Dendritic cell treated with granulocyte-macrophage colony-stimulating factor and Interleukin-4, amounts not matched to agents 40 ng/mL and 50 ng/mL, for 4 days (primary cell): ENCODE measurements at regions of chr19 and their contacts with region 1.

Region 1: GRCh38 chr19:33302175-33302973 is at the start of gene CEBPA:
- H3K4me3 Mint-ChIP-seq: peak within 1 kb of the TSS; percentile 97
- H3K27ac Mint-ChIP-seq: peak within 1 kb of the TSS; percentile 93
- H3K4me1 Mint-ChIP-seq: peaks cover 52% of the 10 kb centered on the region
- H3K27me3 Mint-ChIP-seq: no peaks in the 10 kb centered on the region

Region 2: DNA sequence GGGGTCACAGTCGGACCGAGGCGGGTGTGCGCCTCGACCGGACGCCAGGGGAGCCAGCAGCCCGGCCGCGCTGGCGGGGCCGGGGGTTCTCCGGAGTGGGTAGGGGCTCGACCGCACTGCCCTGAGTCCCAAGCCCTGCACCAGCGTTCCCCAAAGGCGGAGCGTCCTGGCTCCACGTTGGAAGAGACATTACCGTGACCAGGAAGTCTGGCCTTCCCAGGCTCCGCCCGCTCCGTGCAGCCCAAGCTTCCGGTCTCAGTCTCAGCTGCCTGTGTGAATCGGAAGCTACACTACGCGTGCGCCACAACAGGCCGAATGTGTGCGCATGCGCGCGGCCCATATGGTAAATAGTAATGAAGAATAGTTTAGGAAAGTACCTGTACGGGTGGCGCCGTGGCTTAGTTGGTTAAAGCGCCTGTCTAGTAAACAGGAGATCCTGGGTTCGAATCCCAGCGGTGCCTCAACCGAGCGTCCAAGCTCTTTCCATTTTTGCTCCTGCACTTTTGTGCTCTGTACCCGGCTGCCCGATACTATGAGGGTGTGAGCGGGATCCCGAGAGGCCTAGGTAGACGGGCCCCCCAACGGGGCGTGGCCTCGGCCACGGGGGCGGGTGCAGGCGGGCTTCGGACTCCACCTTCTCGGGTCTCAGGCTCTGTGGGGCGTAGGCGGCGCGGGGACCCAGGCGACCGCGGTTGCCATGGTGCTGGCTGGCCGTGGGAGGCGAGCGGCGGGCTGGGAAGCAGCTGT is 125.5 kb before region 1 on chr19:
- intact Hi-C with region 1: loop called (anchors 1 kb)
- H3K4me3 Mint-ChIP-seq: peak overlapping the region; percentile 93
- H3K27ac Mint-ChIP-seq: peak overlapping the region; percentile 92
- H3K4me1 Mint-ChIP-seq: peaks cover 54% of the 10 kb centered on the region
- H3K27me3 Mint-ChIP-seq: no peaks in the 10 kb centered on the region

Region 3: DNA sequence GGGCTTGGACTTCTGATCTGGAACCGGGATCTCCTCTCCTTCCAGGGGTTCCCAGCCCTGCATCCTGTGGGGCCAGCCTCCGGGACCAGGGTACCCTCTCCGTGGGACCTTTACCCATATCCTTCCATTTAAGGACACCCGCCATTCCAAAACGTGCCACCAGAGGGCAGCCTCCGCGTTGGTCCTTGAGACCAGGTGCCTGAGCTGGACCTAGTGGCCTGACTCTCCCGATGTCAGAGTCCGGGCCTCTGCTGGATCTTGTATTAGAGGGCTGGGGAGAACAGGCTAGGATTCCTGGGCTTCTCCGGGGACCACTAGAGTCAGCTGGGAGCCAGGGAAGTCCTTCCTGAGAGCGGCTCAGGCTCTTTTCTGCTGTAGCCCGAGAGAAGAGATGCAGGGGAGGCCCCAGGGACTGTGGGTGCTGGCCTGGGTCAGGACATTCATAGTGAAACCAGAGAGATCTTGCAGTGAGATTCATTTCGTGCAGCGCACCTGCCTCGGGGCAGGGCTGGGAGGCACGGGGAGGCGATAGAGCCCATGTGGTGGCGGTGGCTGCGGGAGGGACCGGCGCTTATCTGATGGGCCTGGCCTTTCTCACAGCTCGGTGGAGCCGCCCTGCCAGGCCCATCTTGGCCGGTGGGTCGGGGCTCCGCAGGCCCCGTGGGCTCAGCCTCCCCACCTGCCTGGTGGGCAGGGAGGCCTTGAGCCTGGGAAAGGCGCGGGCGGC is 66.9 kb before region 1 on chr19:
- intact Hi-C with region 1: loop called (anchors 2 kb)
- H3K4me3 Mint-ChIP-seq: no peak overlapping the region
- H3K27ac Mint-ChIP-seq: no peak overlapping the region
- H3K4me1 Mint-ChIP-seq: peaks cover 24% of the 10 kb centered on the region
- H3K27me3 Mint-ChIP-seq: peaks cover 4% of the 10 kb centered on the region

Region 4: DNA sequence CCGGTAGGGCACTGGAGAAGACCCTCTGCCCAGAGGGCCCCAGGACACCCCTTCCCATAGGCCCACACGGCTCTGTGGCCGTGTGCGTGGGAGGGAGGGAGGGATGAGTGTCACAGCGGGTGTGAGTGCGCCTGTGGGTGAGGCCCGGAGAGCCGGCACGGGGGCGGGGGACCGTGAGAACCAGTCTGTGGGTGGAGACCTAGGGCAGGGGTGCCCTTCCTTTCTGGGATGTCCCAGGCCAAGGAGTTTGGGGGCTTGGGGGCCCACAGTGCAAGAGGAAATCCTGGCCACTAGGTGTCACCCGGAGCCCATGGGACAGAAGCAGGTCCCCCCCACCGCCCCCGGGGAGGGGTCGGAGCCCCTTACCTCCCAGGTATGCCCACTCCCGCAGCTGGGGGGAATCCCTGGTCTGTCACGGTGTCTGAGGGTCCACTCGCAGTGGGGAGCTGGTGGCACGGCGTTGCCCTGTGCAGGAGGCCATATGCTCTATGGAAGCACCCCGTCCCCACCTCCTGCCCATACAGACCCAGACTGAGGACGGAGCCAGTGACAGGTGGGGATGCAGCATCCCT is 60.8 kb before region 1 on chr19:
- intact Hi-C with region 1: loop called (anchors 5 kb)
- H3K4me3 Mint-ChIP-seq: no peak overlapping the region
- H3K27ac Mint-ChIP-seq: peak overlapping the region; percentile 31
- H3K4me1 Mint-ChIP-seq: peaks cover 44% of the 10 kb centered on the region
- H3K27me3 Mint-ChIP-seq: peaks cover 4% of the 10 kb centered on the region

Region 5: DNA sequence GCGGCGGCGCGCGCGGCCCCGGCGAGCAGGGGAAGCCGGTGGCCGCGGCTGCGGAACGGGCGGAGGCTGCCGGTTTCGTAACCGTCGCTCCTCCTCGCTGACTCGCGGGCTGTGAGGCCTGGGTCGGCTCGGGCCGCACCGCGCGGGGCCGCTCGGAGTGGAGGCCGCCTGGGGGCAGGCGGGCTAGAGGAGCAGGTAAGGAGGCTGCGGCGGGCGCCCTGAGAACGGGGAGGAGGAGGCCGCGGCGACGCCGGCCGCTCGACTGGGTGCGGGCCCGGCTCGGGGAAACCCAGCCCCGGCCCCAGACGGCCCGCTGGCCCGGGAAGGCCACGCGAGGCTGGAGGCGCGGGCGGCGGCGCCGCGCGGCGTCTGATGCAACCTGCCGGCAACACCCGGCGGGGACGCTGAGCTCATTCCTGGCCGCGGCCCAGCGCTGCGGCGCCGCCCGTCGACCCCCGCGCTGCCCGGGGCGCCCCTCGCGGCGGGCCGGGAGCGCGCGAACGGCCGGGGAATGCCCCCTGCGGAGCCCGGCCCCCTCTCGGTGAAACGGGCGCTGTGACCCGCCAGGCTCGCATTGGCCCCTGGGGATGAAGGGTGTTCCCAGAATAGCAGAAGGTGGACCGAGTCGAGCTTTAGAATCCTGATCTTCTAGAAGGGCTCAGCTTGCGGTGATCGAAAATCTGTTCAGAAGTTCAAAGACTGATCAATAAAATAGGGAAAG is 71.5 kb after region 1 on chr19 and contains the start of gene CEBPG:
- intact Hi-C with region 1: loop called (anchors 1 kb)
- H3K4me3 Mint-ChIP-seq: peak within 1 kb of the TSS; percentile 87
- H3K27ac Mint-ChIP-seq: peak within 1 kb of the TSS; percentile 95
- H3K4me1 Mint-ChIP-seq: peaks cover 56% of the 10 kb centered on the region
- H3K27me3 Mint-ChIP-seq: no peaks in the 10 kb centered on the region

Region 6: GRCh38 chr19:33406521-33407139 is 104.3 kb after region 1 on chr19:
- intact Hi-C with region 1: loop called (anchors 5 kb)
- H3K4me3 Mint-ChIP-seq: no peak overlapping the region
- H3K27ac Mint-ChIP-seq: peak overlapping the region; percentile 91
- H3K4me1 Mint-ChIP-seq: peaks cover 67% of the 10 kb centered on the region
- H3K27me3 Mint-ChIP-seq: no peaks in the 10 kb centered on the region